Activated T-helper 1 cell treated with anti-CD3 and anti-CD28 coated beads, Interleukin-12 subunit alpha, Interleukin-12 subunit beta, Interleukin-2, Interleukin-4 antibody, amounts not matched to agents 30 ng/mL and 10 ng/mL and 1 ng/mL, durations not matched to agents 14 hours and 24 hours and 36 hours (primary cell): ENCODE measurements at regions of chr3 and their contacts with region 1.

Region 1: DNA sequence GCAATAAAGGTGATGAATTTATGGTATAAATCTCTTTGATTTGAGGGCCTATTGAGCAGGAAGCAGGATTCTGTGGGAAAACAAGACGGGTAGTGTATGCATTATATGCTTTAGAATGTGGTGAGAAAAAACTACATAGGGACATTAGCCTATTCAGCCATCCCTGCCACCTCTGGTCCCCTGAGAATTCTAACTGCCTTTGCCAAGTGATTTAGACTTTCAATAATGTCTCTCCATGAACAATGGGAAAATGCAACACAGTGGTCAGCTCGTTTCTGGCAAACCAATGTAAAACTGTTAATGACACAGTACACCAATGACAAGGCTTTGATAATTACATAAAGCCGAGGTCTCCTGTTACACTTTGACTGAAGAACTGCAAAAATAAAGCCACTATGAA is 314.7 kb upstream of the CNTN4 start:
- DNase-seq: no peak
- H3K4me3 Mint-ChIP-seq: no peak overlapping the region
- H3K27ac Mint-ChIP-seq: no peak overlapping the region
- H3K4me1 Mint-ChIP-seq: no peaks in the 10 kb centered on the region
- H3K27me3 Mint-ChIP-seq: no peaks in the 10 kb centered on the region

Region 2: GRCh38 chr3:1506090-1506489 is 277.9 kb before region 1 on chr3:
- intact Hi-C with region 1: no loop called
- DNase-seq: no peak
- H3K4me3 Mint-ChIP-seq: no peak overlapping the region
- H3K27ac Mint-ChIP-seq: no peak overlapping the region
- H3K4me1 Mint-ChIP-seq: no peaks in the 10 kb centered on the region
- H3K27me3 Mint-ChIP-seq: no peaks in the 10 kb centered on the region

Region 3: GRCh38 chr3:1734494-1735122 is 49.4 kb before region 1 on chr3:
- intact Hi-C with region 1: loop called (anchors 1 kb)
- DNase-seq: no peak
- H3K4me3 Mint-ChIP-seq: no peak overlapping the region
- H3K27ac Mint-ChIP-seq: no peak overlapping the region
- H3K4me1 Mint-ChIP-seq: no peaks in the 10 kb centered on the region
- H3K27me3 Mint-ChIP-seq: no peaks in the 10 kb centered on the region